HepG2 (cell line): ENCODE measurements at regions of chr4 and their contacts with region 1.

Region 1: DNA sequence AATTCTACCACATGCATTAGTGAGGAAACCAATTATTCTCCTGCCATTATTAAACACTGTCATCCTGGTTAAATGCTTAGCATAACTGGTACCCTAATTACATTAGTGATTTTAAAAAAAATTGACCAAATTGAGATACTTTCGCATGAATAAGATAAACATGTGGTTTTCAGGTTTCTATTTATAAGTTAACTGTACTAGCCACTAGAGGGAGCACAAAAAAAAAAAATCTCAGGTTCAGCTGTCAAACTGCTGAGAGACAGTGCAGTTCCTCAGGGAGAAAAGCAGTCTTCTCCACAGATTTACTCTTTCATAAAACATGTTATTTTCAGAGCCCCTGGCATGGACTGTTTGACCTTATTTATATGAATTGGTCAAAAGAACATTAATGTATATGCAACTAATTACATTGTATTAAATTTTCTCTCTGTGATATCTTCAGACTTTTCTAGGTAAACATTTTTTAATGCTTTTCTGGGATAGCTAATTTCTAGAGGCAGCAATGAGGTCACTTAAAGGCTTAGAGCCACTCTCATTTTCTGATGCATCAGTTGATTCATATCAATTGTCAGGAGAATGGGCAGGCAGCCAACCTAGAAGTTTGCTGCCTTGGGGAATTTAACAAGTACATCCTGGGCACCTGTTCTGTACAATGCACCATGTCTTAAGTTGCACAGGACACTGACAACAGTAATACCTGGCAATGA is 167.5 kb downstream of the CDS1 start:
- DNase-seq: peak; percentile 27
- ATAC-seq: peak; percentile 86
- H3K4me3 ChIP-seq: no peak overlapping the region
- H3K27ac ChIP-seq: no peak overlapping the region
- H3K4me1 ChIP-seq: no peaks in the 10 kb centered on the region
- H3K27me3 ChIP-seq: no peaks in the 10 kb centered on the region
- CTCF ChIP-seq: peak; percentile 50
- EP300 ChIP-seq: no peak
- POLR2A ChIP-seq: no peak
- RAD21 ChIP-seq: no peak

Region 2: DNA sequence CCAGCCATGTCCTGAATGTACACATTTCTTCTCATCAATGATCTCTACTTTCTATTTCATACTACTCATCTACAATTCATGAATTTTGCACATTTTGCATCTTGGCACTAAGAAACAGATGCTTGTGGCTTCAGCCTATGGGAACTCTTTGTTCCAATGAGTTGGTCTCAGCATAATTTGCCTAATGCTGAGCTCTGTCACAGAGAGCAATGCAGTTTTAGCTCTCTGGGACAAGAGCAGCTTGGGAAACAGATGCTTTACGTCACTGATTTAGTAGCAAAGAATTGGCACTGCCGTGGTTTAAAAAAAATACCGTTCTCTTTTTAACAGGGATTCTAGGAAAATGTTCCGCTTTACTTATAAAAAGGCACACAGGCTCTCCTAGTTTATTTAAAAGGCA is 53.7 kb after region 1 on chr4:
- CTCF ChIA-PET with region 1: no interaction called
- POLR2A ChIA-PET with region 1: no interaction called
- in situ Hi-C with region 1: no loop called
- intact Hi-C with region 1: no loop called
- DNase-seq: no peak
- ATAC-seq: no peak
- H3K4me3 ChIP-seq: no peak overlapping the region
- H3K27ac ChIP-seq: no peak overlapping the region
- H3K4me1 ChIP-seq: no peaks in the 10 kb centered on the region
- H3K27me3 ChIP-seq: no peaks in the 10 kb centered on the region
- CTCF ChIP-seq: no peak
- EP300 ChIP-seq: no peak
- POLR2A ChIP-seq: no peak
- RAD21 ChIP-seq: no peak

Region 3: GRCh38 chr4:84826681-84827080 is 76.3 kb after region 1 on chr4:
- CTCF ChIA-PET with region 1: no interaction called
- POLR2A ChIA-PET with region 1: no interaction called
- in situ Hi-C with region 1: no loop called
- intact Hi-C with region 1: no loop called
- DNase-seq: no peak
- ATAC-seq: no peak
- H3K4me3 ChIP-seq: no peak overlapping the region
- H3K27ac ChIP-seq: no peak overlapping the region
- H3K4me1 ChIP-seq: no peaks in the 10 kb centered on the region
- H3K27me3 ChIP-seq: no peaks in the 10 kb centered on the region; a peak in 1 of 5 replicates
- CTCF ChIP-seq: no peak
- EP300 ChIP-seq: no peak
- POLR2A ChIP-seq: no peak
- RAD21 ChIP-seq: no peak

Region 4: DNA sequence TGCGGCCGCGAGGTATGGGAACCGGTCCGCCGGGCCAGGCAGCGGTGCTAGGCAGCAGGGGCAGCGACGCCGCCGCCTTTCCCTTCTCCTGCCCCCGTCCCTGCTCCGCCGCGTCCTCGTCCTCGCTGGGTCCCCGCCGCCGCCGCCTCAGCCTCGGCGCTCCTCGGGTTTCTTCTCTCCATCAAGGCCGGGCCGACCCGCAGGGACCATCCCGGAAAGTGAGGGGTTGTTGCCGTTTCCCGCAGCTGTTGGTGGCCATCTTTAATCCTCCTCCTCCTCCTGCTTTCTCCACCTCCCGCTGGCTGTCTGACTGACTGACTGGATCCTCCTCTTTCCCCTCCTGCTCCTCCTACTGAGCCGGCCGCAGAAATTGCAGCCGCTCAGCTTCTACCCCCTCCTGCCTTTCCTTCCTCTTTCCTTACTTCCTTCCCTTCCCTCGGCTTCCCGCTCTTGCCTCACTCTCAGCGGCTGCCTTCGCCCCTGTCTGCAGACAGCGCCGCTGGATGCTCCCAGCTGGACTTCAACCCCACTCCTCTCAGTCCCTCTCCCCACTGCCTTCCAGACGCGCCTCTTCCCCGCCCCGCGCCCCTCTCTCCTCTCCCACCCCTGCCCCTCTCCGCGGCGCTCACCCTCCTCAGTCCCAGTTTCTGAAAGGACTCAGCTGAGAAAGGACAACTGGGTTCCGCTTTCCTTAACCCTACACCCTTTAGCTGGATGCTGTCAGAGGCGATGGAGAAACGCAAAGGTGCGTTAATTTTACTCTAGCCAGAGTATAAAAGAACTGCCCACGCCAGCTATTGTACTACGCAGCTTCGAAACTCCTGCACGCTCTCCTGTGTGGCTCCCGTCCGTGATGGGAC is 216.2 kb after region 1 on chr4 and contains the start of gene WDFY3:
- CTCF ChIA-PET with region 1: interaction called, 43 read pairs
- POLR2A ChIA-PET with region 1: no interaction called
- in situ Hi-C with region 1: loop called (anchors 5 kb)
- intact Hi-C with region 1: loop called (anchors 1 kb)
- DNase-seq: peak; percentile 58
- ATAC-seq: peak; percentile 85
- H3K4me3 ChIP-seq: peak within 1 kb of the TSS; percentile 89 to 91 (median 90)
- H3K27ac ChIP-seq: peak within 1 kb of the TSS; percentile 82
- H3K4me1 ChIP-seq: peaks cover 23% of the 10 kb centered on the region
- H3K27me3 ChIP-seq: no peaks in the 10 kb centered on the region
- CTCF ChIP-seq: no peak; the same call in none of the 2 replicates
- EP300 ChIP-seq: no peak
- POLR2A ChIP-seq: peak; percentile 66 to 80
- RAD21 ChIP-seq: no peak; the same call in 1 of the 2 replicates
- total RNA-seq, gene WDFY3: 24.5 and 30.8 TPM in 2 replicates